ENCODE measurements at regions of chr2 and their contacts with region 1.

Region 1: DNA sequence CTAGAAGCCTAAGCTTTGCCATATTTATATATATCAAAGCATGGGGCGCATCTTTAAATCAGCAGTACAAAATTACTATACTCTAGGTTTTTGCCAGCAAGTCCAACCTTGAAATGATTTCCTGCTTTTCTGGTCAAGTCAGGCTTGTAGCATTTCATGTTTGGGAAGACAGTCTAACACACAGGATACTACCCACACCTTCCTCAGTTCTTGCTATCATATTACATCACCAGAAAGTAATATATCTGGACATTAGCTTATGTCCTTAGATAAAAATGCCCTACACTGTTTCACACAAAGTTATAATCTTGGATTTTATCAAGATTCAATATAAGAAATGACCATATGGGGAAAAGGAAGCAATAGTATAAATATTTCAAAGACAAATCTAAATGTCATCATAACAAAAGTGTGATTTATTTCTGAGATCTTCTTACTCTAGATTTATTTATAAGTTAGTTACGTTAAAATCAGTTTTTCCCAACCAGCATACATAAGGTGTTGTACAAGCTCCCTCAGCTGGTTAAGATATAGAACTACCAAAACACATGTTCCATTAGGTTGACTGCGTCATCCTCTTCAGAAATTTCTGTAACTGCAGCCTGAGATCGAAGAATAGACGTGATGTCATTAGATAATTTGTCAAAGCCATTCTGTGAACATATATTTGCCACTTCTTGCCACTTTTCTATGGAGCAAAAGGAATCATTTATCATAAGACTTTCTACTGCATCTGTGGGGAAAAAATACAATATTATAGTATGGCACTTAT is 56.7 kb downstream of the CLHC1 start:
- DNase-seq: peak in 1 of 2 experiments; percentile 36
- H3K4me3 ChIP-seq: no peak overlapping the region
- H3K4me3 Mint-ChIP-seq: no peak overlapping the region
- H3K27ac Mint-ChIP-seq: no peak overlapping the region
- H3K4me1 ChIP-seq: no peaks in the 10 kb centered on the region
- H3K4me1 Mint-ChIP-seq: peaks cover 12% of the 10 kb centered on the region
- H3K27me3 ChIP-seq: no peaks in the 10 kb centered on the region
- H3K27me3 Mint-ChIP-seq: no peaks in the 10 kb centered on the region
- CTCF ChIP-seq: peak; percentile 44 to 50

Region 2: GRCh38 chr2:54665436-54665856 is 510.0 kb before region 1 on chr2:
- CTCF ChIA-PET with region 1: no interaction called
- POLR2A ChIA-PET with region 1: no interaction called
- intact Hi-C with region 1: loop called (anchors 10 kb)
- DNase-seq: peak; percentile 63 to 70
- H3K4me3 ChIP-seq: no peak overlapping the region
- H3K4me3 Mint-ChIP-seq: peak overlapping the region; percentile 8
- H3K27ac Mint-ChIP-seq: peak overlapping the region; percentile 83
- H3K4me1 ChIP-seq: peaks cover 33% of the 10 kb centered on the region
- H3K4me1 Mint-ChIP-seq: peaks cover 41% of the 10 kb centered on the region
- H3K27me3 ChIP-seq: no peaks in the 10 kb centered on the region
- H3K27me3 Mint-ChIP-seq: no peaks in the 10 kb centered on the region
- CTCF ChIP-seq: peak; percentile 55 to 68

Region 3: GRCh38 chr2:54899576-54900200 is 275.8 kb before region 1 on chr2:
- CTCF ChIA-PET with region 1: interaction called, 14 read pairs
- POLR2A ChIA-PET with region 1: no interaction called
- intact Hi-C with region 1: loop called (anchors 1 kb)
- DNase-seq: peak in 1 of 2 experiments; percentile 50
- H3K4me3 ChIP-seq: no peak overlapping the region
- H3K4me3 Mint-ChIP-seq: no peak overlapping the region
- H3K27ac Mint-ChIP-seq: no peak overlapping the region
- H3K4me1 ChIP-seq: peaks cover 47% of the 10 kb centered on the region
- H3K4me1 Mint-ChIP-seq: peaks cover 22% of the 10 kb centered on the region
- H3K27me3 ChIP-seq: no peaks in the 10 kb centered on the region
- H3K27me3 Mint-ChIP-seq: no peaks in the 10 kb centered on the region
- CTCF ChIP-seq: peak; percentile 65 to 69

Region 4: DNA sequence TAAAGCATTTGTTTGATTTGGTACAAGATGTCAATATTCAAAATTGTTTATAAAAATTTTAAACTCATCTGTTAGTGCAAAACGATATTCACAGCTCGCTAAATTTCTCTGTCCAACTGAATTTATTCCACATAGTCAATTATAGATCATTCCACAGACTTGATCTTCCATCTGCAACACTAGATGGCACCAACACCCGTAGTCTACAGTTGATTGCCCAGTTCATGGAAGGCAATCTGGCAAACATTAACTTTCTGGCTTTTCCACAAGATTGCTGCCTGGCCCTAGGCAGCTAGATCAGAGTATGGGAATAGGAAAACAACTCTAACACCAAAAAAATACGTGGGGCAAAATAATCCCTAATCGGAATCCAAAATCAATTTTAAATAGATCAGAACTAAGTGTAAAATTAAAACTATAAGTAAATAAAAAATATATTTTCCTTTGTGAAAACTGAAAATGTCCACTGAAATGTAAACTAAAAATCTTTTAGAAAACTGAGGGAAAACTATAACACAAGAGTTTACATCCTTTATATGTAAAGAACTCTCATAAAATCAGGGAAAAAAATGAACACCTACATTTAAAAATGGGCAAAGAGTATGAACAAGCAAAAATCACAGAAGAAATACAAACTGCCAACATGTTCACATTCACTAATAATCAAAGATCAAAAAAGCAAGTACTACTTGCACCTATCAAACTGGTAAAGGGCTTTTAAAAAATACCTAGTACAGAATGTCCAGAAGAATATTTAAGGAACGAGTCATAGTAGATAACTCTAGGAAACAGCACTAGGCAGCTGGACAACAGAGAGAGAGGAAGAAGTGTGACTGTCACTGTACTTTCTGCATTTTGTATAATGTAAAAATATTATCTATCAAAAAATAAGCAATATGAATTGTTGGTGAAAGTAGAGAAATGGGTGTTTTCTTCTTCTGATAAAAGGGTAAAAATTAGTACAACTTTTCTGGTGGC is 160.2 kb before region 1 on chr2:
- CTCF ChIA-PET with region 1: interaction called, 8 read pairs
- POLR2A ChIA-PET with region 1: interaction called, 3 read pairs
- intact Hi-C with region 1: loop called (anchors 1 kb)
- DNase-seq: peak; percentile 77 to 81
- H3K4me3 ChIP-seq: no peak overlapping the region
- H3K4me3 Mint-ChIP-seq: peak overlapping the region; percentile 55
- H3K27ac Mint-ChIP-seq: peak overlapping the region; percentile 55
- H3K4me1 ChIP-seq: peaks cover 55% of the 10 kb centered on the region
- H3K4me1 Mint-ChIP-seq: peaks cover 37% of the 10 kb centered on the region
- H3K27me3 ChIP-seq: no peaks in the 10 kb centered on the region
- H3K27me3 Mint-ChIP-seq: no peaks in the 10 kb centered on the region
- CTCF ChIP-seq: peak; percentile 64 to 75

Region 5: GRCh38 chr2:55196506-55196905 is 21.1 kb after region 1 on chr2:
- CTCF ChIA-PET with region 1: no interaction called
- POLR2A ChIA-PET with region 1: no interaction called
- intact Hi-C with region 1: no loop called
- DNase-seq: no peak
- H3K4me3 ChIP-seq: no peak overlapping the region
- H3K4me3 Mint-ChIP-seq: no peak overlapping the region
- H3K27ac Mint-ChIP-seq: no peak overlapping the region
- H3K4me1 ChIP-seq: no peaks in the 10 kb centered on the region
- H3K4me1 Mint-ChIP-seq: no peaks in the 10 kb centered on the region
- H3K27me3 ChIP-seq: no peaks in the 10 kb centered on the region
- H3K27me3 Mint-ChIP-seq: no peaks in the 10 kb centered on the region
- CTCF ChIP-seq: no peak

Measured in Caco-2 (cell line).